ENCODE measurements at regions of chr5 and their contacts with region 1.

Region 1: DNA sequence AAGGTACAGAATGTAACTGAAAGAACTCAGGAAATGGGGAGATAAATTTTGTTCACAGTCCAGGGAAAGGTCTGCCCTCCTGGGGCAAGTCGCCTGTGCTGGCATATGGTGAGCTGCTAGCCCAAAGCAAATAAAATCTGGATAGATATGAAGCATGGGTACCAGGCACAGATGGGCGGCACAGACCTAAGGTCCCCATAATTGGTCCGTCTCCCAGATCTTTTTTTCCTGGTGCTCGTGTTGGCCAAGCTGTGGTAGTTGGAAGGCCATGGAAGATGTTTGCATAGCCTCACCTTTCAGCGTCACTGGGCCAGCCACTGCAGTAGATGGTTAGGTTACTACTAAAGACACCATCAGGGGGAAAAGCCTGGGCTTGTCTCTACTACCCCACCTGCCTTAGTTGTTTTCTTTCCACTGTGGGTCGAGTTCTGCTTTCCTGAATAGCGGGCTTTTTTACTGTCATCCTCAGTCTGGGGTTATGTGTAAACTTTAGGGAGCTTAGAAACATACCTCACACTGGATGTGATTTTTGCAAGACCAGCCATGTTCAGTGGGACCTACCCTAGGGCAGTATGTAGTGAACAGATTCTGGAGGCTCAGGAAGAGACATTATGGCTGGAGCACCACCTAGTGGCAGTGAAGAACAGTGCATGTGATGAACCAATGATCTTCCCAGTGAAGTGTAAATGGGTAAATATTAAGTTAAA is 24.2 kb upstream of the GLRX start:
- DNase-seq: no peak
- ATAC-seq: peak; percentile 69

Region 2: GRCh38 chr5:95664204-95664786 is 182.4 kb before region 1 on chr5:
- intact Hi-C with region 1: loop called (anchors 10 kb)
- DNase-seq: no peak
- ATAC-seq: peak; percentile 27

Region 3: GRCh38 chr5:95781101-95781583 is 65.6 kb before region 1 on chr5:
- intact Hi-C with region 1: loop called (anchors 2 kb)
- DNase-seq: peak; percentile 81
- ATAC-seq: peak; percentile 91